Cardiac septum (tissue), 1 donor: ENCODE measurements at regions of chr22 and their contacts with region 1.

Region 1: GRCh38 chr22:37792494-37792893 is 15.2 kb upstream of the GCAT start:
- DNase-seq: no peak

Region 2: DNA sequence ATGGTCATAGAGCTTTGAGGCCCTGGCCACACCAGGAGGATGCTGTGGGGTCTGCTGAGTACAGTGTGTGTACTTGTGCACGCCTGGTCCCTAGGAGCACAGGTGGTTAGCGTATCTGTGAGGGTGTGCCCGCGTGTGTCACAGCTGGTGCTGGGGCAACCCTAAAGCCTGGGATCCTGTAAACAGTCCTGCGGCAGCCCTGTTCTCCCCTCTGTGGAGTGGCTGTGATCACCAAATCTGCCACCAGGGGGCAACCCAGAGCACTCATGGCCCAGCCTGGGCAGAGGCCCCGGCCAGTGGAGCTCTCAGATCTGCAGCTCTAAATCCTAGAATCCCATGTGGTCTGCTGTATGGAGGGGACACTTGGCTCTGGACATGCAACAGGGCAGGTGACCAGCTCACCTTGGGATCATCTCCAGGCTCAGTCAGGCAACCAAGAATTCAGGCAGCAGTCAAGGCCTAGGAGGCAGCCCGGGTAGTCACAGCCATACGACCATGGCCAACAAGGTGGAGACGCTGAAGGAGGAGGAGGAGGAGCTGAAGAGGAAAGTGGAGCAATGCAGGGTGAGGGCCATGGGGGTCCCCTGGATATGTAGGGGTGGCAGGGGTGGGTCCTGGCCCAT is 149.2 kb before region 1 on chr22:
- intact Hi-C with region 1: loop called (anchors 5 kb)
- DNase-seq: peak; percentile 92

Region 3: GRCh38 chr22:37807410-37808293 is 15.2 kb after region 1 on chr22 and contains the start of gene GCAT:
- intact Hi-C with region 1: no loop called
- DNase-seq: peak; percentile 97
- total RNA-seq, gene GCAT: 24.0 TPM